ENCODE measurements at regions of chr13 and their contacts with region 1.

Region 1: GRCh38 chr13:99151516-99151915 is 49.1 kb upstream of the UBAC2 start:
- DNase-seq: peak; percentile 57 to 95
- H3K4me3 ChIP-seq: peak overlapping the region; percentile 26; the same call in 1 of the 2 replicates
- H3K27ac ChIP-seq: peak overlapping the region; percentile 90
- H3K4me1 ChIP-seq: peaks cover 57% of the 10 kb centered on the region
- H3K27me3 ChIP-seq: no peaks in the 10 kb centered on the region
- CTCF ChIP-seq: no peak

Region 2: DNA sequence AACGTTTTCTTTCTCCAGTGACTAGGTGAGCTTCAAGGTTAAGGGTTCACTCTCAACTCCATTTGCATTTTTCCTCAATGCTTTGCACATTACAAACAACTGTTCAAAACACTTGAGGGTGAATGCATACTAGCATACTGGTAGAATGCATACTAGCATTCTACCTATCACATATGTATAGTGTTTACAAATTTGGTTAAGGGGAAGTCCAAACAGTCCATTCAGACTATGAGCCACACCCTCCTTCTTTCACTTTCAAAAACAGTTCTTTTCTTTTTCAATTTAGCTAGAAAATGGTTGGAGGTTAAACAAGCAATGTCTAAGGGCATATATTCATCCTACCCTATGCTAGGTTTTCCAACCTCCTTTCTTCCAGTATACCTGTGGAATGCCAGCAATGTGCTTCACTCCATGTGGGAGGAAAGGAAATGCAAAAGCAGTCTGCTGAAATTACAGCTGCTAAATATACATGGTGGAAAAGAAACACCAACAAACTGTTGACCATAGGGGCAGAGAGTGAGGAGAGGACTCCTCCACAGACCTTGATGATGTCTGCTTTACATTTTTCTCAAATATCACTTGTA is 276.3 kb before region 1 on chr13:
- CTCF ChIA-PET with region 1: no interaction called
- POLR2A ChIA-PET with region 1: no interaction called
- intact Hi-C with region 1: no loop called
- DNase-seq: no peak
- H3K4me3 ChIP-seq: no peak overlapping the region
- H3K27ac ChIP-seq: no peak overlapping the region
- H3K4me1 ChIP-seq: no peaks in the 10 kb centered on the region
- H3K27me3 ChIP-seq: no peaks in the 10 kb centered on the region
- CTCF ChIP-seq: no peak

Region 3: DNA sequence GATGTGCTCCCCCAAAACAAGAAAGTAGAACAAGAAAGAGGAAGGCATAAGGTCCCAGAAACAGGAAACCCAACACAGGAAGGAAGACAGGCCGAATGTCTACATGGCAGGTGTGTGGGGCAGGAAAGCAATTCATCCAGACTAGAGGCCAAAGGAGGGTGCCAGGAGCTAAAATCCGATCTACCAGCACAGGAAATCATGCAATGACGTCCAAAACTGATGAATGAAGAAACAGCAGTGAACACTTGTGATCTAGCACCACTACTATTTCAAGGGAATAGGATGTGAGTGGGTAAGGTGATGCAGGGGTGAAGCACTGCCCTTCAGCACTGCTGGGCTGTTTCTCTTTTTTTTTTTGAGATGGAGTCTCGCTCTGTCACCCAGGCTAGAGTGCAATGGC is 232.7 kb before region 1 on chr13:
- CTCF ChIA-PET with region 1: no interaction called
- POLR2A ChIA-PET with region 1: no interaction called
- intact Hi-C with region 1: no loop called
- DNase-seq: no peak
- H3K4me3 ChIP-seq: no peak overlapping the region
- H3K27ac ChIP-seq: no peak overlapping the region
- H3K4me1 ChIP-seq: no peaks in the 10 kb centered on the region
- H3K27me3 ChIP-seq: no peaks in the 10 kb centered on the region
- CTCF ChIP-seq: no peak

Region 4: GRCh38 chr13:99046851-99047250 is 104.7 kb before region 1 on chr13:
- CTCF ChIA-PET with region 1: no interaction called
- POLR2A ChIA-PET with region 1: no interaction called
- intact Hi-C with region 1: loop called (anchors 1 kb)
- DNase-seq: no peak
- H3K4me3 ChIP-seq: peak overlapping the region; percentile 48
- H3K27ac ChIP-seq: peak overlapping the region; percentile 84
- H3K4me1 ChIP-seq: peaks cover 76% of the 10 kb centered on the region
- H3K27me3 ChIP-seq: no peaks in the 10 kb centered on the region
- CTCF ChIP-seq: no peak

Region 5: DNA sequence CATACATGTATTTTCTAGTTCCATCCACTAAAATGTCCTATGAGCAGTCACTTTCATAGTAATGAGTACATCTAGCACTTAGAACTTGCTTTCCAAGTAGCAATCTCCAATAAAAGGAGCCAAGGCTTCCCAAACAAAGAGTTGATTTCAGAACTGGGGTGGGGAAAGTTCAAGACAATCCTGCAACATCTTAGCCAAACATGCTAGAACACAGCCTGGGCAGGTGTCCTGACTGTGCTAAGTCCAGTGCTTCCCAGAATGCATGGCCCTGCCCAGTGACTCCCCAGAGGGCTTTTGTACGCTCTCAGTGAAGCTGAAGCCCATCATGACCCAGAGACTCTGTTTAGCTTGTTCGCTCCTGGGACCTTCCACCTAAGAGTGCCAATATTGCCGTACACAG is 57.5 kb before region 1 on chr13:
- CTCF ChIA-PET with region 1: no interaction called
- POLR2A ChIA-PET with region 1: no interaction called
- intact Hi-C with region 1: no loop called
- DNase-seq: no peak
- H3K4me3 ChIP-seq: no peak overlapping the region
- H3K27ac ChIP-seq: no peak overlapping the region
- H3K4me1 ChIP-seq: peaks cover 3% of the 10 kb centered on the region
- H3K27me3 ChIP-seq: no peaks in the 10 kb centered on the region
- CTCF ChIP-seq: no peak

Region 6: DNA sequence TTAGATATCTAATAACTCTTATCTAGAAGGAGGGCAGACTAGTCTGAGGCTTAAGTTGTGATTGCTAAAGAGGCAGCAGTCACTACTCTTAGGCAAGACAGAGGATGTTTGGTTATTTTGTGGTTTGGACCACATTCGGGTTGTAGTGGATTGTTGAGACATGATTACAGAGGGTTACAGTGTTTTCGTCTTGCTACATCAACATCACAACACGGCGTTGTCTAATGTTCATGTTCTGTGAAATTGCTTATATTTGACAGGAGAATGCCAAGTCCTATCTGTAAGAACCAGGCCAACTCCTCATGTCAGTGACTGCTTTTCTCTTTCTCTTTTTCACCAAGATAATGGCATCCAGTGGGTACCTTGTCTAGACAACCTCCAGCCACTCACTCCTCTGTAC is 333.0 kb after region 1 on chr13:
- CTCF ChIA-PET with region 1: no interaction called
- POLR2A ChIA-PET with region 1: no interaction called
- intact Hi-C with region 1: no loop called
- DNase-seq: no peak
- H3K4me3 ChIP-seq: no peak overlapping the region
- H3K27ac ChIP-seq: no peak overlapping the region
- H3K4me1 ChIP-seq: peaks cover 4% of the 10 kb centered on the region; the same call in 1 of the 2 replicates
- H3K27me3 ChIP-seq: no peaks in the 10 kb centered on the region
- CTCF ChIP-seq: no peak